Naive thymus-derived CD4-positive, alpha-beta T cell (primary cell): ENCODE measurements at regions of chr14 and their contacts with region 1.

Region 1: GRCh38 chr14:67666750-67667449 is 7.5 kb downstream of the VTI1B start:
- DNase-seq: peak in 7 of 9 donors; percentile 43 to 64 (median 52)
- ATAC-seq: peak; percentile 88
- H3K4me3 ChIP-seq: no peak overlapping the region
- H3K4me3 Mint-ChIP-seq: peak overlapping the region in 2 of 10 donors; percentile 21 to 23
- H3K27ac ChIP-seq: no peak overlapping the region
- H3K27ac Mint-ChIP-seq: peak overlapping the region; percentile 14 to 88 (median 58)
- H3K4me1 ChIP-seq: peaks cover 5 to 7% of the 10 kb centered on the region in 2 donors
- H3K4me1 Mint-ChIP-seq: peaks cover 32 to 75% (median 63%) of the 10 kb centered on the region in 7 donors
- H3K27me3 ChIP-seq: no peaks in the 10 kb centered on the region
- H3K27me3 Mint-ChIP-seq: no peaks in the 10 kb centered on the region

Region 2: DNA sequence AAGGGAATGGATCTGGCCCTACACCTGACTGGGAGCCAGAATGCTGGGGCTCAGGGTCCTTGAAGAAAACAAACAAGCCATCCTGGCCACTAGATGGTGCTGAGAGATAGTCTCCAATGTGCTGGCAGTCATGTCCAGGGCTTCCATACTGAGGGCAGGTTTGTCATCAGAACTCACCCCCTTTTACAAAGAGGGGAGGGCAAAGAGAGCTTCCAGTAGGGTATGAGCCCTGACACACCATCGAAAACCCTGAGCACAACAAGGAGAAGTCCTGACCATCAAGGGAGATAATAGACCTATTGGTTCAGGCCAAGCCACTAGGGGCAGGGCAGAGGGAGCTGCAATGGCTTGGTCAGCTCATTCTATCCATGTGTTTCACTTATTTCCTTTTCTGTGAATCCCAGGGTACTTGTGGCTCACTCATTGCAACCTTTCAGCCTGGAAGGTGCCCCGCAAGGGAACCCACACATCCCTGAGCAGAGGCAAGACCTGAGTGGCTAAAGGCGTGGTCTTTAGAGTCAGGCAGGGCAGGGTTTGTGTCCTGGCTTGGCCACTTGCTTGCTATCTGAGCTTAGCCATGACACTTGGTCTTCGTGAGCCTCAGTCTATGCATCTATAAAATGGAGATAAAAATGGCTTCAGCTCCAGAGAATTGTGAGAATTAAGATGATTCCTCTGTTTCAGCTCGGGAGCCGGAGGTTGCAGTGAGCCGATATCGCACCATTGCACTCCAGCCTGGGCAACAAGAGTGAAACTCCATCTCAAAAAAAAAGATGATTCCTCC is 140.0 kb before region 1 on chr14:
- CTCF ChIA-PET with region 1: no interaction called
- POLR2A ChIA-PET with region 1: no interaction called
- intact Hi-C with region 1: loop called (anchors 1 to 5 kb)
- DNase-seq: peak in 5 of 9 donors; percentile 33 to 46 (median 35)
- ATAC-seq: peak; percentile 78
- H3K4me3 ChIP-seq: no peak overlapping the region
- H3K4me3 Mint-ChIP-seq: no peak overlapping the region
- H3K27ac ChIP-seq: no peak overlapping the region
- H3K27ac Mint-ChIP-seq: no peak overlapping the region
- H3K4me1 ChIP-seq: no peaks in the 10 kb centered on the region
- H3K4me1 Mint-ChIP-seq: peaks cover 0 to 6% (median 0%) of the 10 kb centered on the region in 7 donors
- H3K27me3 ChIP-seq: no peaks in the 10 kb centered on the region
- H3K27me3 Mint-ChIP-seq: peaks cover 30 to 75% (median 36%) of the 10 kb centered on the region in 5 donors

Region 3: GRCh38 chr14:67571272-67571850 is 95.5 kb before region 1 on chr14:
- CTCF ChIA-PET with region 1: no interaction called
- POLR2A ChIA-PET with region 1: no interaction called
- intact Hi-C with region 1: loop called in 1 of 2 experiments (anchors 1 kb)
- DNase-seq: peak; percentile 44 to 76 (median 64)
- ATAC-seq: peak; percentile 87
- H3K4me3 ChIP-seq: no peak overlapping the region
- H3K4me3 Mint-ChIP-seq: no peak overlapping the region
- H3K27ac ChIP-seq: no peak overlapping the region
- H3K27ac Mint-ChIP-seq: peak overlapping the region in 1 of 9 donors; percentile 32
- H3K4me1 ChIP-seq: no peaks in the 10 kb centered on the region
- H3K4me1 Mint-ChIP-seq: peaks cover 0 to 18% (median 0%) of the 10 kb centered on the region in 7 donors
- H3K27me3 ChIP-seq: no peaks in the 10 kb centered on the region
- H3K27me3 Mint-ChIP-seq: peaks cover 0 to 13% (median 5%) of the 10 kb centered on the region in 5 donors

Region 4: DNA sequence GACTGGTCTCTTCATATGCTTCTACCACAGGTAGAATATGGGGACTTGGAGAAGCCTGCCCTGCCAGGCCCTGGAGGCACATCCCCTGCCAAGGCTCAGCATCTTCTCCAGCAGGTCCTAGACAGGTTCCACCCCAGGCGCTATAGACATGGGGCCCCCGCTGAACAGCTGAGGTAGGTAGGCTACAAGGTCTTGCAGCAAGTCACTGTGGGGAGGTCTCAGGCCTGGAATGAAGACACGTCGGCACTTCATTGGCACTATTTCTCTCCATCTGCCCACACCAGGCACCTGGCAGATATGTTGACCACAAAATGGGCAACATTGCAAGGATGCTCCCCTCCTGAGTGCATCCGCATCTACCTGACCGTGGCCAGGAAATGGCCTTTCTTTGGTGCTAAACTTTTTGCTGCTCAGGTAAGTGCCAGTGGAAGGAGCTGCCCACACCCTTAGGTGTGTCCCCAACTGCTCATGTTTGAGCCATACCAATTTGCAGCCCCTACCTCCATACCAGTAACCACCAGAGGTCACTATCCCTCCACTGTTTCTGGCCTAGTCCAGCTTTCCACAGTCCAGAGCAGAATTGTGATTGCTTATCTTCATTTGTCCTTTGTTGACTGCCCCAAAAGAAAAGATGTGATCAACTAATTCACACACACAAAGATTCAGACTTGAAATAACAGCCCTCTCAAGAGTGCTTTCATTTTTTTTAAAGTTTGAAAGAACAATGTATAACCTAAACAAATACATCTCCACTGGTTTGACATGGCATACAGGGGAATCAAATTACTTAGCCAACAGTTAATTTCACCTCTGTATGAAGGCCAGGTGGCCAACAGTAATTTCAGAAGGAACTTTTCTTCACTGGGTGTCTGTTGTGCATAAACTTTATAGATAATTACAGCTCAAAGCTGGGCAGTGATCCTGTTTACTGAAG is 82.9 kb before region 1 on chr14:
- CTCF ChIA-PET with region 1: interaction called, 11 read pairs
- POLR2A ChIA-PET with region 1: no interaction called
- intact Hi-C with region 1: loop called (anchors 1 kb)
- DNase-seq: peak in 5 of 9 donors; percentile 26 to 44 (median 35)
- ATAC-seq: peak; percentile 79
- H3K4me3 ChIP-seq: no peak overlapping the region
- H3K4me3 Mint-ChIP-seq: no peak overlapping the region
- H3K27ac ChIP-seq: no peak overlapping the region
- H3K27ac Mint-ChIP-seq: no peak overlapping the region
- H3K4me1 ChIP-seq: no peaks in the 10 kb centered on the region
- H3K4me1 Mint-ChIP-seq: peaks cover 0 to 11% (median 0%) of the 10 kb centered on the region in 7 donors
- H3K27me3 ChIP-seq: no peaks in the 10 kb centered on the region
- H3K27me3 Mint-ChIP-seq: no peaks in the 10 kb centered on the region